ENCODE measurements at regions of chr14 and their contacts with region 1.

Region 1: DNA sequence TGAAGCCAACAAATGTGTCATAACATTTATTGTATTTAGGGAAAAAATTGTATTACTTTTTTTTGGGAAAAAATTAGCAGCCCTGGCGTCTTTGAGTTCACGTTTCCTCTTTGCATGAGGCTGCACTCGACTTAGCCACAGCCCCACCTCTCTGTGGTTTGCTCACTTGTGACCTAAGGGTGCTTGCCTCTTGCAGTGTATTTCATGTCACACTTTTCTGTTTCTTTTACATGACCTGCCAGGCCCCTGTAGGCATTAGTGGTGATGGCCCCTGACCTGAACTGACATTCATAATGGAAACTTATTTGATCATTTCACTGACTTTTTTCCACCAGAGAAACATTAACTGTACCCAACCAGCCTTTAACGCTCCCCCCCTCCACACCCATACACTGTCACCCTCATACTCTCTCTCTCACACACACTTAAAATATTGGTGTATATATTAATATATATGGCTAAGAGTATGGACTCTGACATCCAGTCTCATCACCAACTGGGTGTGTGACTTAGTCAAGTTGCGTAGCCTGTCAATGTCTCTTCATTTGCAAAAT is 122.9 kb downstream of the PRKCH start:
- DNase-seq: peak; percentile 64
- CTCF ChIP-seq: no peak

Region 2: GRCh38 chr14:61433169-61433568 is 11.1 kb before region 1 on chr14:
- CTCF ChIA-PET with region 1: interaction called, 12 read pairs
- POLR2A ChIA-PET with region 1: no interaction called
- DNase-seq: no peak
- CTCF ChIP-seq: no peak

Region 3: GRCh38 chr14:61512026-61512834 is 67.9 kb after region 1 on chr14:
- CTCF ChIA-PET with region 1: no interaction called
- POLR2A ChIA-PET with region 1: no interaction called
- DNase-seq: no peak
- CTCF ChIP-seq: no peak

Region 4: GRCh38 chr14:61710853-61711817 is 266.8 kb after region 1 on chr14:
- CTCF ChIA-PET with region 1: no interaction called
- POLR2A ChIA-PET with region 1: no interaction called
- DNase-seq: no peak
- CTCF ChIP-seq: no peak